PC-3 (cell line): ENCODE measurements at regions of chr6 and their contacts with region 1.

Region 1: GRCh38 chr6:164927288-164928056 is 381.9 kb downstream of the C6orf118 start:
- DNase-seq: peak; percentile 61
- ATAC-seq: peak; percentile 93
- H3K4me3 ChIP-seq: no peak overlapping the region
- H3K27ac ChIP-seq: no peak overlapping the region
- H3K4me1 ChIP-seq: no peaks in the 10 kb centered on the region
- H3K27me3 ChIP-seq: no peaks in the 10 kb centered on the region
- CTCF ChIP-seq: peak; percentile 87

Region 2: GRCh38 chr6:163170294-163170883 is 1757.1 kb before region 1 on chr6:
- CTCF ChIA-PET with region 1: no interaction called
- POLR2A ChIA-PET with region 1: no interaction called
- intact Hi-C with region 1: loop called (anchors 10 kb)
- DNase-seq: peak; percentile 33
- ATAC-seq: no peak
- H3K4me3 ChIP-seq: no peak overlapping the region
- H3K27ac ChIP-seq: no peak overlapping the region
- H3K4me1 ChIP-seq: no peaks in the 10 kb centered on the region
- H3K27me3 ChIP-seq: no peaks in the 10 kb centered on the region
- CTCF ChIP-seq: peak; percentile 72

Region 3: DNA sequence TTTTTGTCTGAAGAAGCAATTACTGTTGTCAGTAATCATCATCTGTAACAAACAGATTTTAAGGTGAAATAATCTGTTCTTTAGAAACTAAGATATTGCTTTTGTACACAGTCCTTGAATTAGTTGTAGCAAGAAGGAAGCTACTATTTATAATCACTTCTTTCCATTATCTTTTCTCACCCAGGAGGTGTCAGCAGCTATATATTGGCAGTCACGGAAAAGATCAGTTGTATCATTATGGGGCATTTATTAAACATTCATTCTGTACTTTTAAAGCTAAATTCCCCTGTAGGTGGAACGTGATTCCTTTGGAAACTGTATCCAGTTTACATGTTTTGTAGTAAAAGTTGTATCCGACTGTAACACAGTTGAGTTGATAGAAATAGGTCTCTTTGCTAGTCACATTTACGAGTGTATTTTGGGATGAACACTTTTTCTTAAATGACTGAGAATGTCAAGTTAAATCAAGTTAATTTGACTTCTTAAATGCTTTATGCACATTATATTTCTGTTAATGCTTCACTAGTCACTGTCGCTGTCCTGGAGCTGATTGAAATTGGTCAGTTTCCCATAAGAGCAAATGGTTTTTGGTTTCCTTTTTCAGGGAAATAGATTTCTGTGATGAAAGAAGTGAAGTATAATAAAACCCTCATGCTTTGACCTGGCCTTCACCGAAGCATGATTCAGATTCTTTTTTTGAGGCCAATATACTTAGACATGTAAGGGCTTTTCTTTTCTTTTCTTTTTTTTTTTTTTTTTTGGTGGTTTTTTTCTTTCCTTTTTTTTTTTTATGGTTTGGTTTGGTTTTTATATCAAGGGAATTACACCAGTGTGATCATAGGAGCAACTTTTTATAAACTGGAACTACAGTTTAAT is 1507.8 kb before region 1 on chr6:
- CTCF ChIA-PET with region 1: no interaction called
- POLR2A ChIA-PET with region 1: no interaction called
- intact Hi-C with region 1: loop called (anchors 2 kb)
- DNase-seq: peak; percentile 28
- ATAC-seq: no peak
- H3K4me3 ChIP-seq: peak overlapping the region; percentile 68
- H3K27ac ChIP-seq: no peak overlapping the region
- H3K4me1 ChIP-seq: peaks cover 33% of the 10 kb centered on the region
- H3K27me3 ChIP-seq: no peaks in the 10 kb centered on the region
- CTCF ChIP-seq: no peak

Region 4: GRCh38 chr6:165049364-165049763 is 121.9 kb after region 1 on chr6:
- CTCF ChIA-PET with region 1: no interaction called
- POLR2A ChIA-PET with region 1: no interaction called
- intact Hi-C with region 1: loop called (anchors 5 kb)
- DNase-seq: peak; percentile 60
- ATAC-seq: 0 out of 2 replicates have a peak, but pooled peaks have one; percentile 20
- H3K4me3 ChIP-seq: no peak overlapping the region
- H3K27ac ChIP-seq: no peak overlapping the region
- H3K4me1 ChIP-seq: no peaks in the 10 kb centered on the region
- H3K27me3 ChIP-seq: no peaks in the 10 kb centered on the region
- CTCF ChIP-seq: peak; percentile 75

Region 5: DNA sequence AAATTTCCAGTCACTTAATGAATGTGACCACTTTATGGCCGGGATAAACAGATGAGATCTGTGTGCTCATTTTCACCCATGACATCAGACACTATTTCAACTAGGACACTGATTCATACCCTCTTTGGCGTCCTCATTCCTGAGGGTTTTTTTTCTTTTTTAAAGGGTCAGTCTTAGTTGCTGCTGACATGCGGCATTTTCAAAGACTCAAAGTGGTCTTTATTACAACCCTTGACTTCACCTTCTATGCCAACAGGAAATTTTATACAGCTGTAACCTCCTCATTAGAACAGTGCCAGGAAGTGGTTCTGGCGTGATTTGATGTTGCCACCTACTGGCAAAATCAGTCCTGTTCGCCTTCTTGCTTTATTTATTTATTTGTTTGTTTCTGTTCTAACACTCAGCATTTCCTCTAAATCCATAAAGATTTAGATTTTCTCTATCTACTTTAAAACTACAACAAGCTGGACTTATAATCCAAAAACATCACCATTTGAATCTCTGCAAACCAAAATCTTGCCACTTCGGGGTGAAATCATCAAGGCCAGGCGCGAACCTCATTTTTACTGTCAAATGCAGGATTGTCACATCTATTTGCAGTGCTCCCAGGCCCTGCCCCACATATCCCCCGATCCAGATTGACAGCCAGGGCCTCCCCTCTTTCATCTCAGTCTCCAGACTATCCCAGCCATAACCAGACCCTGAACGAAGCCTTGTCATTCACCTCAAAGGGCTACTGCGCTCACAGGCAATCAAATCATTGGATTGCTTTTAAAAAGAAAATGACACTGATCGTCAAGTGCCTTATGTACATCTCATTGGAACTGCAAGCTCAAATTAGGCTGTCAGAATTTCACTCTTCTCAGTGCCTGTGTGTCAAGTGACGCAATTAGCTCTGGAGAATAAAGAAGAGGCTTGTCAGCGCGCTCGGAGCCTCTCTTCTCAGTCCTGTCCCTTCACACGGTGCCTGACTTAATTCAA is 304.4 kb after region 1 on chr6:
- CTCF ChIA-PET with region 1: no interaction called
- POLR2A ChIA-PET with region 1: no interaction called
- intact Hi-C with region 1: loop called (anchors 10 kb)
- DNase-seq: peak; percentile 62
- ATAC-seq: no peak; the same call in 1 of the 2 replicates
- H3K4me3 ChIP-seq: no peak overlapping the region
- H3K27ac ChIP-seq: no peak overlapping the region
- H3K4me1 ChIP-seq: peaks cover 10% of the 10 kb centered on the region
- H3K27me3 ChIP-seq: no peaks in the 10 kb centered on the region
- CTCF ChIP-seq: peak; percentile 76